ENCODE measurements at regions of chr14 and their contacts with region 1.

Region 1: DNA sequence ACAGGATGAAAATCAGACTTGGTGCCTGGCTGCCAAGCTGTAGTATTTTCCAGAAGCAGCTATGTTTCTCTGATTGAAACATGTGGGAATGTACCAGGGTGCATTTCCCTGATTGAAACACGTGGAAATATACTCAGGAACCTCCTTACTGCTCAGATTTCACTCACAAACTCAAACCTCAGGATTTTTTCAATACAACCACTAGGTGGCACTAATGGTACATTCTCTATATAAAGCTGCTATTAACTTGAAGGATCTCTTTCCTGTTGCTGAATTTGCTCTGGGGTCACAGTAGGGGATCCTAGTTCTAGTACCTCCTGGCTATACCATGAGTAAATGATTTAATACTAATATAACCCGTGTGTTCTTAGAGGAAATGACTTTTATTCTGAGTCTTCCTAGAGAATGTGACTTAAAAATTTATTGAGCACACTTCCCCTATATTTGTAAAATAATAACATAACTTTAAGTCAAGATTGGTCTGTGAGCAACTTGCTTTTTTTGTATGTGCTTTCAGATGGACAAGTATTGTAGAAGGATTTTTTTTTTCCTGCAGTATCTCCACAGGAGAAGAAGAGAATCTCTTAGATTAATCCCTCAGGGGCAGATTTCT is 173.8 kb upstream of the MIS18BP1 start:
- DNase-seq: no peak
- ATAC-seq: no peak
- H3K4me3 Mint-ChIP-seq: no peak overlapping the region
- H3K27ac Mint-ChIP-seq: no peak overlapping the region
- H3K4me1 Mint-ChIP-seq: no peaks in the 10 kb centered on the region
- H3K27me3 Mint-ChIP-seq: no peaks in the 10 kb centered on the region

Region 2: GRCh38 chr14:45287610-45288009 is 139.2 kb before region 1 on chr14:
- CTCF ChIA-PET with region 1: no interaction called
- POLR2A ChIA-PET with region 1: no interaction called
- intact Hi-C with region 1: no loop called
- DNase-seq: no peak
- ATAC-seq: no peak
- H3K4me3 Mint-ChIP-seq: no peak overlapping the region
- H3K27ac Mint-ChIP-seq: no peak overlapping the region
- H3K4me1 Mint-ChIP-seq: peaks cover 11% of the 10 kb centered on the region
- H3K27me3 Mint-ChIP-seq: peaks cover 17% of the 10 kb centered on the region

Region 3: DNA sequence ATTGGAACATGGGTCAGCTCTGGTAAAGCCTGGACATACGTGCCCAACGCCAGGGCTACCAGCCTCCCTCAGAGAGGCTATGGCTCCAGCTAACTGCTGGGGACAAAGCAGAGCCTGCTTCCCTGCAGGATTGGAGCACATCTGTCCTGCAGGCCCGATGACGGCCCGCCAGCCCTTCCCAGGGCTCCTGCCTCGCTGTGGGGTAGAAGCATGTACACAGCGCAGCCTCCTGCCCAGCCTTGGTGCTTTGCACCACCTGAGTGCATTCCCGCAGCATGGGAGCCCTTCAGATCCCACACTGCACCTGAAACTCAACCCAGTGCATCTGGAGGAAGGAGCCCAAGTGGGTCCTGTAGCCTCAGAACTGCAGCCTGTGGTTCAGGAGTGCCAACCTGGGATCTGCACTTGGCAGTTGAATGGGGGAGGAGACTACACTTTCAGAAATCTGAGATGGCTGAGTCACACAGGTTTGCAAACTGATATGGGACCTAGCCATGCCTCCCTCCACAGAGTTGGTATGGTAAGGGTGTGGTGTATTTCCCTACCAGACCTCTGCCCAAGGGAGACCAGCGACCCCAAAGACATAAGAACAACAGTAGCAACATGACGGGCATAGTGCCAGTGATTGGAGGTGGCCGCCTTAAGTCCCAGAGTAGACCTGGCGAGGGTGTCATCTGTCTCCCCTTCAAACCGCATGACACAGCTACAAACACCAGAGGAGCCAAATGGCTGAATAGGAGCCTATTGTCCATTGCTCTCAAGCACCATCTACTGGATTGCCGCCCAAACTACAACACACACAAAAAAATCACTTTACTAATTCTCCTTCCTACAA is 100.2 kb after region 1 on chr14:
- CTCF ChIA-PET with region 1: no interaction called
- POLR2A ChIA-PET with region 1: no interaction called
- intact Hi-C with region 1: loop called in 1 of 2 experiments (anchors 1 kb)
- DNase-seq: peak; percentile 18
- ATAC-seq: no peak
- H3K4me3 Mint-ChIP-seq: no peak overlapping the region
- H3K27ac Mint-ChIP-seq: no peak overlapping the region
- H3K4me1 Mint-ChIP-seq: no peaks in the 10 kb centered on the region
- H3K27me3 Mint-ChIP-seq: no peaks in the 10 kb centered on the region

Region 4: GRCh38 chr14:45716572-45716971 is 289.8 kb after region 1 on chr14:
- CTCF ChIA-PET with region 1: no interaction called
- POLR2A ChIA-PET with region 1: no interaction called
- intact Hi-C with region 1: loop called in 1 of 2 experiments (anchors 10 kb)
- DNase-seq: no peak
- ATAC-seq: no peak
- H3K4me3 Mint-ChIP-seq: no peak overlapping the region
- H3K27ac Mint-ChIP-seq: no peak overlapping the region
- H3K4me1 Mint-ChIP-seq: no peaks in the 10 kb centered on the region
- H3K27me3 Mint-ChIP-seq: no peaks in the 10 kb centered on the region

Region 5: GRCh38 chr14:46344327-46344937 is 917.7 kb after region 1 on chr14:
- CTCF ChIA-PET with region 1: no interaction called
- POLR2A ChIA-PET with region 1: no interaction called
- intact Hi-C with region 1: loop called (anchors 2 kb)
- DNase-seq: peak; percentile 3
- ATAC-seq: no peak
- H3K4me3 Mint-ChIP-seq: no peak overlapping the region
- H3K27ac Mint-ChIP-seq: no peak overlapping the region
- H3K4me1 Mint-ChIP-seq: no peaks in the 10 kb centered on the region
- H3K27me3 Mint-ChIP-seq: no peaks in the 10 kb centered on the region

Region 6: DNA sequence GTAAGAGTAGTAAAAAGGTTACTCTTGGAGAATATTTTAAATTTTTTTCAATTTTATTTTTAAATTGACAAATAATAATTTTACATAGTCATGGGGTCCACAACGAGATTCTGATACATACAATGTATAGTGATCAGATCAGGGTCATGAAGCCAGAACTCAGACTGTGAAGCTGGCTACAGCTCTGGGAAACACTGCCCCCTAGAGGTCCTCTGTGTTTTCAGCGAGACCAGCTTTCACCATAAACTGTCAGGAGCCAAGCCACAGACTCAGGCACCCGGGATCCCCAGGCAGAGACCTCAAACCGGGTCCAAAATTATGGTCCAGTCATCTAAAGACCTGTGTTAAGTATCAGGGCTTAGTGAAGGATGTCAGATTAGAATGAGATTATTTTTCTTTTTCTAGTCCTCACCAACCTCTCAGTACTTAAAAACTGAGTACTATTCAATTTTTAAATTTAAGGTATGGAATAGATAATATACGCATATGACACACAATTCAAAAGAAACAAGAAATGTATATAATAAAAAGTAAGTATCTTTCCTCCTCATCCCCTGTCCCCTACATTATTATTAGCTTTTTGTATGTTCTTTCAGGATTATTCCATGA is 1851.6 kb after region 1 on chr14:
- CTCF ChIA-PET with region 1: no interaction called
- POLR2A ChIA-PET with region 1: no interaction called
- intact Hi-C with region 1: loop called in 1 of 2 experiments (anchors 10 kb)
- DNase-seq: peak; percentile 69
- ATAC-seq: peak; percentile 53
- H3K4me3 Mint-ChIP-seq: no peak overlapping the region
- H3K27ac Mint-ChIP-seq: no peak overlapping the region
- H3K4me1 Mint-ChIP-seq: peaks cover 2% of the 10 kb centered on the region
- H3K27me3 Mint-ChIP-seq: no peaks in the 10 kb centered on the region

Measured in activated CD4-positive, alpha-beta T cell treated with anti-CD3 and anti-CD28 coated beads for 36 hours (primary cell).